Dorsolateral prefrontal cortex (tissue), 120 donors: ENCODE measurements at regions of chr10 and their contacts with region 1.

Region 1: GRCh38 chr10:7000061-7000460 is 410.8 kb downstream of the SFMBT2 start:
- DNase-seq: peak in 1 of 10 donors; percentile 30
- H3K4me3 ChIP-seq: peak overlapping the region in 7 of 59 donors; percentile 0 to 33 (median 5)
- H3K27ac ChIP-seq: peak overlapping the region; percentile 60 to 99 (median 93)
- H3K27me3 ChIP-seq: peaks cover 0 to 11% (median 0%) of the 10 kb centered on the region in 45 donors
- CTCF ChIP-seq: no peak

Region 2: DNA sequence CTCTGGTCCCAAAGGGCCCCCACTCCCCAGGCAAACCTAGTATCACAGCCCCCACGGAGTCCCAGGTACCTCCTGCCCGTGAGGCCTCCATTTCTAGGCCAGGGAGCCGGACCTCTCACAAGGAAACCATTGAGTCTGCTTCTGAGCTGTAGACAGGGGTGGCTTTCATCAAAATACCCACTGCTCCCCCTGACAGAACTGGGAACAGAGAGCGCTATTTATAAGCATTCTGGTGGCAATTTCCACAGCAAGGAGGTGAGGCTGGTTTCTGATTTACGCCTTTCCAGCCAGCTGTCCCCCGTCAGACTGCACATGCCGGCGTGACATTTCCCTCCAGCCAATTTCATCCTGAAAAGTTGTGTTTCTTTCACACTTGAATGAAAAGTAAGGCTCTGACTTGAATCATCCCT is 12.5 kb before region 1 on chr10:
- intact Hi-C with region 1: loop called in 1 of 2 experiments (anchors 1 kb)
- DNase-seq: peak; percentile 12 to 88 (median 75)
- H3K4me3 ChIP-seq: peak overlapping the region in 32 of 59 donors; percentile 3 to 53 (median 31)
- H3K27ac ChIP-seq: peak overlapping the region; percentile 58 to 100 (median 96)
- H3K27me3 ChIP-seq: no peaks in the 10 kb centered on the region
- CTCF ChIP-seq: peak in 13 of 56 donors; percentile 8 to 40 (median 19)

Region 3: DNA sequence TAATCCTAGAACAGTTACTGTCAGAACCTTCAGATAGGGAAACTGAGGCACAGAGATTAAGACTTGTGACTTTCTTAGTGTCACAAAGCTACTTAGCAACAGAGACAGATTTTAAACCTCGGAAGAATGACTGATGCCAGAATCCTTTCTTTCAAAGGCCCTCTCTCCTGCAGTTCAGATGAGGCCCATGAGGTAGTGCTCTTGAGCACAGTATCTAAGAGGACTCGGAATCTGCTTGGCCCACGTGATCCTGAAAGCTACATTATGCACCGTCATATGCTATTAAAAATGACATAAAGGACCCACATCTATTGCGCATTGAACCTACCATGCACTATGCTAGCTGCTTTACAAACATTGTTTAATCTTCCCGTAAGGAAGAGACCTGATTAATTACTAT is 54.8 kb after region 1 on chr10:
- intact Hi-C with region 1: loop called in 1 of 2 experiments (anchors 5 kb)
- DNase-seq: peak in 1 of 10 donors; percentile 20
- H3K4me3 ChIP-seq: no peak overlapping the region
- H3K27ac ChIP-seq: no peak overlapping the region
- H3K27me3 ChIP-seq: no peaks in the 10 kb centered on the region
- CTCF ChIP-seq: peak in 43 of 56 donors; percentile 7 to 60 (median 40)

Region 4: GRCh38 chr10:7085913-7086589 is 86.0 kb after region 1 on chr10:
- intact Hi-C with region 1: loop called (anchors 2 to 10 kb)
- DNase-seq: peak in 1 of 10 donors; percentile 27
- H3K4me3 ChIP-seq: peak overlapping the region in 52 of 59 donors; percentile 1 to 58 (median 34)
- H3K27ac ChIP-seq: peak overlapping the region; percentile 33 to 97 (median 91)
- H3K27me3 ChIP-seq: no peaks in the 10 kb centered on the region
- CTCF ChIP-seq: peak in 24 of 56 donors; percentile 5 to 45 (median 28)